PC-3 (cell line): ENCODE measurements at regions of chr1 and their contacts with region 1.

Region 1: DNA sequence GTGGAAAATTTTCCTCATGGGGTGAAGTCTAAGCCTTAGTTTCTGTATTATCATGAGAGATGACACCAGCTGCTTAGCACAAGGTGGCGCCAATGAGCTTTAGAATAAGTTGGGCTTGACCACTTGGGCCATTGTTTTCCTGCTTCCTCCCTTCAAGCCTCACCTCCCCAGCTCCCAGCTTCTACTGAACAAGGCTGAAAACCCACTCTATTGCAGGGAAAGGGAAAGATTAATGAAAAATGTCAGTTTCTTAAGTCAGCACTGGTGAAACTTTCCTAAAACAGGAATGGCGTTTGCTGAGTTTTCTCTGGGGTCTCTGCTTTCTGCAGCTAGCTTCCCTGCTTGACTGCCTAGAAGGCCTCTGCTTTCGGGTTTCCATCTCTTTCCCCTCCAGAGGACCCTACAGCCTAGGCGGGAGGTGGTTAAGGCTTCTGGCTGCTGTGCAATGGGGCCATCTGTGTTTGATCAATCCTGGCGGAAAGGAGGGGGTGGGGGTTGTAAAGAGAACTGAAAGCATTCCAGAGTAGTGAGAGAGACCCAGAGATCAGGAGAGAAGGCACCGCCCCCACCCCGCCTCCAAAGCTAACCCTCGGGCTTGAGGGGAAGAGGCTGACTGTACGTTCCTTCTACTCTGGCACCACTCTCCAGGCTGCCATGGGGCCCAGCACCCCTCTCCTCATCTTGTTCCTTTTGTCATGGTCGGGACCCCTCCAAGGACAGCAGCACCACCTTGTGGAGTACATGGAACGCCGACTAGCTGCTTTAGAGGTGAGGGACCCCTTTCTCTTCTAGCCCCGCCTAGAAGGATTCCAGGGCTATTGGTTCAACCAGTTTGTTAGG is at the start of gene OLFML3:
- DNase-seq: peak; percentile 88
- ATAC-seq: peak; percentile 78
- H3K4me3 ChIP-seq: peak within 1 kb of the TSS; percentile 57
- H3K27ac ChIP-seq: peak within 1 kb of the TSS; percentile 75
- H3K4me1 ChIP-seq: peaks cover 19% of the 10 kb centered on the region
- H3K27me3 ChIP-seq: no peaks in the 10 kb centered on the region
- CTCF ChIP-seq: peak; percentile 83
- total RNA-seq, gene OLFML3: 7.0 TPM in 2 replicates

Region 2: GRCh38 chr1:114093624-114094376 is 114.7 kb after region 1 on chr1:
- CTCF ChIA-PET with region 1: interaction called, 3 read pairs
- POLR2A ChIA-PET with region 1: no interaction called
- intact Hi-C with region 1: loop called (anchors 5 kb)
- DNase-seq: peak; percentile 89
- ATAC-seq: peak; percentile 71
- H3K4me3 ChIP-seq: peak overlapping the region; percentile 24; the same call in 1 of the 2 replicates
- H3K27ac ChIP-seq: peak overlapping the region; percentile 93
- H3K4me1 ChIP-seq: peaks cover 45% of the 10 kb centered on the region
- H3K27me3 ChIP-seq: no peaks in the 10 kb centered on the region
- CTCF ChIP-seq: peak; percentile 71

Region 3: GRCh38 chr1:114219172-114219868 is 240.2 kb after region 1 on chr1:
- CTCF ChIA-PET with region 1: interaction called, 5 read pairs
- POLR2A ChIA-PET with region 1: no interaction called
- intact Hi-C with region 1: loop called (anchors 1 kb)
- DNase-seq: peak; percentile 23
- ATAC-seq: peak; percentile 46; the same call in 1 of the 2 replicates
- H3K4me3 ChIP-seq: no peak overlapping the region
- H3K27ac ChIP-seq: no peak overlapping the region
- H3K4me1 ChIP-seq: no peaks in the 10 kb centered on the region
- H3K27me3 ChIP-seq: peaks cover 11% of the 10 kb centered on the region; the same call in 1 of the 2 replicates
- CTCF ChIP-seq: peak; percentile 45

Region 4: GRCh38 chr1:114346480-114347029 is 367.5 kb after region 1 on chr1:
- CTCF ChIA-PET with region 1: no interaction called
- POLR2A ChIA-PET with region 1: no interaction called
- intact Hi-C with region 1: loop called (anchors 2 kb)
- DNase-seq: peak; percentile 98
- ATAC-seq: peak; percentile 99
- H3K4me3 ChIP-seq: peak overlapping the region; percentile 73
- H3K27ac ChIP-seq: no peak overlapping the region
- H3K4me1 ChIP-seq: peaks cover 18% of the 10 kb centered on the region; the same call in 1 of the 2 replicates
- H3K27me3 ChIP-seq: no peaks in the 10 kb centered on the region
- CTCF ChIP-seq: peak; percentile 100

Region 5: GRCh38 chr1:114670083-114671010 is 691.3 kb after region 1 on chr1:
- CTCF ChIA-PET with region 1: no interaction called
- POLR2A ChIA-PET with region 1: no interaction called
- intact Hi-C with region 1: loop called (anchors 2 kb)
- DNase-seq: peak; percentile 93
- ATAC-seq: peak; percentile 92
- H3K4me3 ChIP-seq: peak overlapping the region; percentile 85
- H3K27ac ChIP-seq: peak overlapping the region; percentile 80
- H3K4me1 ChIP-seq: peaks cover 12% of the 10 kb centered on the region
- H3K27me3 ChIP-seq: 0 out of 2 replicates have a peak, but pooled peaks cover 6% of the 10 kb centered on the region
- CTCF ChIP-seq: no peak